ENCODE measurements at regions of chr4 and their contacts with region 1.

Region 1: DNA sequence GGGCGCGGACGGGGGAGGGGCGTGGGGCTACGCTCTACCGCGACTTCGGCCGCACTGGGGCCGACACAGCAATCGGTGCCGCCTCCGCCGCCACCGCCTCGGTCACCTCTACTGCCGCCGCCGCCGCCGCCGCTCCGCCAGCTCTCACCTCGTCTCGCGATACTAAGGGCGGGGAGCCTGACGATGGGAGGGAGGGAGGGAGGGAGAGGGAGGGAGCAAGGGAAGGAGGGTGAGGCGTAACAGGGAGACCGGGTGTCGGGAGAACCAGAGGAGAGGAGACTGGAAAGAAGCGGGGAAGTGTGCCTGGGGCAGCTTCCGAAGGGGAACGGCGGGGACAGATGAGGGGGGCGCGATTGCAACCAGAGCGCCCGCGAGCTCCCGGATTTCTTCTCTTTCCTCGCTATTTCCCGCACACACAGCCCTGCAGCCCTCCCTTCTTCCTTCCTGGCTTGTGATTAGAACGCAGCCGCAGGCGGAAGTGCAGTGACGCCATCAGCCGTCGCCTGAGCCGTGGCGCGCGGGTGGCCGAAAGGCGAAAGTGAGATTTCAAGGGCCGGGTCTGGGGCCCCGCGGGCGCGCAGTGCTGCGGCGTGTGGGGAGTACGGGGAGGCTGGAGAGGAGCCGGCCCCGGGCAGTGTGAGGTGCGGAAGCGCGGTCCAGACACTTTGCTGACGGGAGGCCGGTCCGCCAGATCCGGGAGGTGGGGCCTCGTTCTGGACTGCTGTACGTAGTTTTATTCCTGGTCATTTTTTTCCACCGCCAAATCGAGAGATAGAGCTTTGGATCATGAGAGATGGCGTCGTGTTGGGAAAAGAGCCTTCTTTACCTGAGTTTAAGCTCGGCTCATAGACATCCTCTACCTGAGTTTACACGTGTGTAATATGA is at the start of gene ANKRD17:
- DNase-seq: peak; percentile 95
- H3K4me3 Mint-ChIP-seq: peak within 1 kb of the TSS; percentile 82
- H3K27ac Mint-ChIP-seq: peak within 1 kb of the TSS; percentile 99
- H3K4me1 Mint-ChIP-seq: peaks cover 17% of the 10 kb centered on the region
- H3K27me3 Mint-ChIP-seq: no peaks in the 10 kb centered on the region
- CTCF ChIP-seq: no peak
- total RNA-seq, gene ANKRD17: 62.8 and 65.7 TPM in 2 replicates

Region 2: DNA sequence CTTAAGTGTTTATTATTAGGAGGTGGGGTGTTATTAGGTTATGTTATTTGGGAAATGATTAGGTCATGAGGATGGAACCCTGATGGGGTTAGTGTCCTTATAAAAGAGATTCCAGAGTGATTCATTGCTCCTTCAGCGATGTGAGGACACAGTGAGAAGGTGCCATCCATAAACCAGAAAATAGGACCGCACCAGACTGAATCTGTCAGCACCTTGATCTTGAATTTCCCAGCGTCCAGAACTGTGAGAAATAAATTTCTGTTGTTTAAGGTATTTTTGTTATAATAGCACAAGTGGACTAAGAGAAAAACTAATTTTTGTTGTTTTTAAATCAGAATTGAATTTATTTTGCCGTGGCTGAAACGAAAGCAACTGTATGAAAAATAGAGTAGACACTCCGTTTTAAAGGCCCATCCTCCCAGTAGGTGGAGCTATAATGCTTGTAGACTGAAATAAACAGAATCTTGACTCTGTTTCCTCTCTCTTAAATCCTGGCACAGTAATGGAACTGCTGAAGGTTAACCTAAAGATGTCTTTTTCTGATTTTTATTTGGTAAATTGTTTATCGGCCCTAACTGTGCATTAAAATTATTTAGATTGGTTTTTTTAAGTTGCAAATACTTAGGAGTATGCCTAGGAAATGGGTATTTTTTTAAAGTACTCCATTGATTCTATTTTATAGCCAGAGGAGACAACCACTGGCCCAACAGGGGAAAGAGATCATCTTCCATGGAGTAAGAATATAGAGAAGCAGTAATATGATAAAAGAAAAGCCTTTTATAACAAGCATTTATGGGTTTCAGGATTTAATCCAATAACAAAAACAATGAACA is 556.7 kb before region 1 on chr4:
- CTCF ChIA-PET with region 1: no interaction called
- POLR2A ChIA-PET with region 1: no interaction called
- intact Hi-C with region 1: loop called (anchors 5 kb)
- DNase-seq: peak; percentile 75
- H3K4me3 Mint-ChIP-seq: peak overlapping the region; percentile 78
- H3K27ac Mint-ChIP-seq: peak overlapping the region; percentile 49
- H3K4me1 Mint-ChIP-seq: no peaks in the 10 kb centered on the region
- H3K27me3 Mint-ChIP-seq: no peaks in the 10 kb centered on the region
- CTCF ChIP-seq: peak; percentile 60

Region 3: DNA sequence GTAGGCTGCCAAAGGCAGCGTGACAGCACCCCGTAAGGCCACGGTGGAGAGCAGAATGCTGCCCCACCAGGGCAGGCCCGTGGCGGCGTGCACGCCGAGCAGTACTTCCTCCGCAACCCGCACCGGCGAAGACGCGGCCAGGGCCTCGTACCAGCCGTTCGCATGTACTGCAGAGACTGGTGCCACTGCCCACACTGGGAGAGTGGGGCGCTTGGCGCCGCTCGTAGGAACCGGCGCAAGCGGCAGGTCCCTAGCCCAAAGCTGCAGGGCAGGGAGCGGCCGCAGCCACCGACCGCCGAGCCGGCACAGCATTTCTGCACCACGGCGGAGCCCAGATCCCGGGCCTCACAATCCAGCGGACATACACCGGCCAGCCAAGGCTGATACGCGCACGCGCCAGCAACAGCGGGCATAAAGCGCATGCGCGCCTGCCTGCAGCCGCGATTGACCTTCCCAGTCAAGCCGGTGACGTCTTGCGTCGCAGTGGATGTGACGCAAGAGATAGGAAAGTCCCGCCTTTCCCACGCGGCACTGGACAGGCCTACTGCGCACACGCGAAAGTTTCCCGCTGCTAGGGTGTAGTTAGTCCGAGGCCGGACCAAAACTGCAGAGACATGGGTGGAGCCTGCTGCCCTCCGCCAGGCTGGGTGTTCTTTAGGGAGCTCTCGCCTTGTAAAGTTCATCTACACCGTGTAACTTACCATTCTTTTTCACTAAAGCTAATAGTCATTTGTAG is 189.4 kb before region 1 on chr4 and contains the start of gene COX18:
- CTCF ChIA-PET with region 1: interaction called, 10 read pairs
- POLR2A ChIA-PET with region 1: interaction called, 78 read pairs
- intact Hi-C with region 1: loop called (anchors 1 kb)
- DNase-seq: peak; percentile 98
- H3K4me3 Mint-ChIP-seq: peak within 1 kb of the TSS; percentile 81
- H3K27ac Mint-ChIP-seq: peak within 1 kb of the TSS; percentile 86
- H3K4me1 Mint-ChIP-seq: peaks cover 9% of the 10 kb centered on the region
- H3K27me3 Mint-ChIP-seq: no peaks in the 10 kb centered on the region
- CTCF ChIP-seq: no peak
- total RNA-seq, gene COX18: 19.1 and 19.7 TPM in 2 replicates

Region 4: GRCh38 chr4:73142995-73143547 is 115.9 kb before region 1 on chr4:
- CTCF ChIA-PET with region 1: interaction called, 5 read pairs
- POLR2A ChIA-PET with region 1: interaction called, 9 read pairs
- intact Hi-C with region 1: loop called (anchors 2 kb)
- DNase-seq: no peak
- H3K4me3 Mint-ChIP-seq: no peak overlapping the region
- H3K27ac Mint-ChIP-seq: no peak overlapping the region
- H3K4me1 Mint-ChIP-seq: no peaks in the 10 kb centered on the region
- H3K27me3 Mint-ChIP-seq: no peaks in the 10 kb centered on the region
- CTCF ChIP-seq: no peak

Region 5: DNA sequence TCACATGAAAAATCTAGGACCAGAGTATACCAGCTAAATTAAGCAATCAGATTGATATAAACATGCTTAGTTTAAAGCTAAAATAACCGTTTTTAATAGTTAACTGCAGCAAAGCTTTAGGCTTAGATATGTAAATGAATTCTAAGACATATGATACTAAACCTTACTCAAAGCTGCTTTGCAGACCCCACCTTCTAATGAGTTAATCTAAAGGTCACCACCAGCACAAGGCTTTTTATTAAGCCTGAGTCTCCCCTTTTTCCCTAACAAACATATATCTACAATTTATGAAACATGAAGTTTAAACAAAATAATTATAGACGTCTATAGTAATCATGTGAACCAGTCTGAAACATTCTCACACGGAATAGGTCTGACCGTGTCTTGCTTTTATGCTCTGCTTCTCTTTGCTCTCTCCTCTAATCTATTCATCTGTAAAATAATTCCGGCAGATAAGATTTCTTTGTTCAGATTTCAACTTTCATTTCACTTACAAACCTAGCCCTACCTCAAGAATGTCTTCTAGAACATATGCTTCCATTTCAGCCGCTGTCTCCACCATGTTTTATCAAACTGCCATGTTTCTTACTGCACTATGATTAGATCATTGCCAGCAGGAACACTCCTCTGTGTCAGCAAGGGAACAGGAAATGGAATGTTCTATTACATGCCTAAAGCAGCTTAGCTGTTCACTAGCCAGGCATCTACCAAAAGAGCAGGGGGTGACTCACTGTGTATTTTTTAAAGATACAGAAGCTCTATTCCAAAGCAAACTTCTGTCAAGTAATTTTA is 36.3 kb before region 1 on chr4:
- CTCF ChIA-PET with region 1: interaction called, 7 read pairs
- POLR2A ChIA-PET with region 1: interaction called, 82 read pairs
- intact Hi-C with region 1: no loop called
- DNase-seq: peak; percentile 90
- H3K4me3 Mint-ChIP-seq: no peak overlapping the region
- H3K27ac Mint-ChIP-seq: no peak overlapping the region
- H3K4me1 Mint-ChIP-seq: peaks cover 11% of the 10 kb centered on the region
- H3K27me3 Mint-ChIP-seq: no peaks in the 10 kb centered on the region
- CTCF ChIP-seq: no peak

Region 6: GRCh38 chr4:73275318-73275654 is 16.4 kb after region 1 on chr4:
- CTCF ChIA-PET with region 1: interaction called, 4 read pairs
- POLR2A ChIA-PET with region 1: interaction called, 11 read pairs
- intact Hi-C with region 1: no loop called
- DNase-seq: no peak
- H3K4me3 Mint-ChIP-seq: no peak overlapping the region
- H3K27ac Mint-ChIP-seq: peak overlapping the region; percentile 21
- H3K4me1 Mint-ChIP-seq: peaks cover 14% of the 10 kb centered on the region
- H3K27me3 Mint-ChIP-seq: no peaks in the 10 kb centered on the region
- CTCF ChIP-seq: no peak

Region 7: GRCh38 chr4:73308286-73308685 is 49.4 kb after region 1 on chr4:
- CTCF ChIA-PET with region 1: interaction called, 5 read pairs
- POLR2A ChIA-PET with region 1: interaction called, 5 read pairs
- intact Hi-C with region 1: loop called (anchors 2 kb)
- DNase-seq: peak; percentile 10
- H3K4me3 Mint-ChIP-seq: no peak overlapping the region
- H3K27ac Mint-ChIP-seq: no peak overlapping the region
- H3K4me1 Mint-ChIP-seq: peaks cover 11% of the 10 kb centered on the region
- H3K27me3 Mint-ChIP-seq: no peaks in the 10 kb centered on the region
- CTCF ChIP-seq: peak; percentile 22

Region 8: DNA sequence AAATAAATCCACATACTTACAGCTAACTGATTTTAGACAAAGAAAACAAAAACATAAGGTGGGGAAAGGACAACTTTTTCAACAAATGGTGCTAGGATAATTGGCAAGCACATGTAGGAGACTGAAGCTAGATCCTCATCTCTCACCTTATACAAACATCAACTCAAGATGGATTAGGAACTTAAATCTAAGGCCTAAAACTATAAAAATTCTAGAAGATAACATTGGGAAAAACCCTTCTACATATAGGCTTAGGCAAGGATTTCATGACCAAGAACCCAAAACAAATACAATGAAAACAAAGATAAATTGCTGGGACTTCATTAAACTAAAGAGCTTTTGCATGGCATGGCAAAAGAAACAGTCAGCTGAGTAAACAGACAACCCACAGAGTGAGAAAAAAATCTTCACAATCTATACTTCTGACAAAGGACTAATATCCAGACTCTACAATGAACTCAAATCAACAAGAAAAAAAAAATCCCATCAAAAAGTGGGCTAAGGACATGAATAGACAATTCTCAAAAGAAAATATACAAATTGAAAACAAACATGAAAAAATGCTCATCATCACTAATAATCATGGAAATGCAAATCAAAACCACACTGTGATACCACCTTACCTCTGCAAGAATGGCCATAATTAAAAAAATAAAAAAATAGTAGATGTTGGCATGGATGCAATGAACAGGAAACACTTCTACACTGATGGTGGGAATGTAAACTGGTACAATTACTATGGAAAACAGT is 163.0 kb after region 1 on chr4:
- CTCF ChIA-PET with region 1: no interaction called
- POLR2A ChIA-PET with region 1: no interaction called
- intact Hi-C with region 1: no loop called
- DNase-seq: no peak
- H3K4me3 Mint-ChIP-seq: no peak overlapping the region
- H3K27ac Mint-ChIP-seq: no peak overlapping the region
- H3K4me1 Mint-ChIP-seq: no peaks in the 10 kb centered on the region
- H3K27me3 Mint-ChIP-seq: peaks cover 16% of the 10 kb centered on the region
- CTCF ChIP-seq: no peak

Region 9: DNA sequence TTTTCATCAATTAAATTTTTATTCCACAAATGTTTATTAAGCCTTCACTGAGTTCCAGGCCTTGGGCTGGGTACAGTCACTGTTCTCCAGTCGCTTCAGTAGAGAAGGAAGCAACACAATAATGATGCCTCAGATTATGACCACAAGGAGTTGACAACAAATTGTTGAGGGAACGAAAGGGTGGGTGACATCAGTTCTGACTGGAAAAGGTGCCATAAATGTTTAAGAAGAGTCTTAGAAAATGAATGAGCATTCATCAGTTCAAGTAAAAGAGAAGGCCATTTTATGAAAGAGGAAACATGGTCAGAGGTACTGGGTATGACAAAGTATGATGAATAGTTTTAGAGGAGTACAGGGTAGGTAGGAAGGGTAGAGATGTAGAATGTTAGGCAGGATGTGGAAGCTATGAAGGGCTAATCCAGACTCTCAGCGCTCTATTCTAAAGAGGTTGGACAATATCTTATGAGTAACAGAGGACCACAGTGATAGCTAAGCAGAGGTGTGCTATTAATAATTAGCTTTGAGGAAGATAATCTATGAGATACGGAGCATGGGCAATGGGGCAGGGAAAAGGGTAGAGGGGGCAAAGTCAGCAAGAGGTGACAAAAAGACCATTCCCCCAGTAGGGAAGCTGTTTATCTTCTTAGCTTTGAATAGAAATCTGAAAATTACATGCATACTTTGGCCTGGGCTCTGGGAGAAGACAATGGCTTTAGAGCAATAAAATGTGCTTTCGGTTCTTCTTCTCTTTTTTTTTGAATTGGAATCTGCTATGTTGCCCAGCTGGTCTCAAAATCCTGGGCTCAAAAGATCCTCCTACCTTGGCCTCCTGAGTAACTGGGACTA is 197.5 kb after region 1 on chr4:
- CTCF ChIA-PET with region 1: no interaction called
- POLR2A ChIA-PET with region 1: no interaction called
- intact Hi-C with region 1: no loop called
- DNase-seq: no peak
- H3K4me3 Mint-ChIP-seq: no peak overlapping the region
- H3K27ac Mint-ChIP-seq: no peak overlapping the region
- H3K4me1 Mint-ChIP-seq: no peaks in the 10 kb centered on the region
- H3K27me3 Mint-ChIP-seq: no peaks in the 10 kb centered on the region
- CTCF ChIP-seq: no peak

Region 10: GRCh38 chr4:74456056-74456744 is 1197.3 kb after region 1 on chr4:
- CTCF ChIA-PET with region 1: no interaction called
- POLR2A ChIA-PET with region 1: no interaction called
- intact Hi-C with region 1: no loop called
- DNase-seq: peak; percentile 73
- H3K4me3 Mint-ChIP-seq: peak overlapping the region; percentile 27
- H3K27ac Mint-ChIP-seq: peak overlapping the region; percentile 58
- H3K4me1 Mint-ChIP-seq: peaks cover 37% of the 10 kb centered on the region
- H3K27me3 Mint-ChIP-seq: no peaks in the 10 kb centered on the region
- CTCF ChIP-seq: no peak